ENCODE measurements at regions of chr17 and their contacts with region 1.

Region 1: DNA sequence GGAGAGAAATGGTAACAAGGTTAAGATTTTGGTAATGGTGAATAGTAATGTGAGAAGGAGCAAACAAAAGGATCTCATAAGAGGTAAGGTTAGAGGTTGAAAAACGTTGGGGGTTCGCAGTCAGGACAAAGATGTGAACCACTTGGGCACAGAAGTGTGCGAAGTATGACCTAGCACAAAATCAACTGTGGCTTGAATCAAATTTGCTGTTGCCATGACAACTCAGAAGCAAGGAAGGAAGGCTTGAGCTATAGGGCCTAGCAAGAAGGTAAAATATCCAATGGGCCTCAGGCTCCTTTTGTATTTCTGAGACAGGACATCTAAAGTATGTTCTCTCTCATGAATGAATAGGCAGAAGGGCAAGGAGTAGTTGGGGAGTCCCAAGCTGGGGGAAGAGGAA is 24.5 kb upstream of the TEKT1 start:
- DNase-seq: no peak
- ATAC-seq: no peak

Region 2: DNA sequence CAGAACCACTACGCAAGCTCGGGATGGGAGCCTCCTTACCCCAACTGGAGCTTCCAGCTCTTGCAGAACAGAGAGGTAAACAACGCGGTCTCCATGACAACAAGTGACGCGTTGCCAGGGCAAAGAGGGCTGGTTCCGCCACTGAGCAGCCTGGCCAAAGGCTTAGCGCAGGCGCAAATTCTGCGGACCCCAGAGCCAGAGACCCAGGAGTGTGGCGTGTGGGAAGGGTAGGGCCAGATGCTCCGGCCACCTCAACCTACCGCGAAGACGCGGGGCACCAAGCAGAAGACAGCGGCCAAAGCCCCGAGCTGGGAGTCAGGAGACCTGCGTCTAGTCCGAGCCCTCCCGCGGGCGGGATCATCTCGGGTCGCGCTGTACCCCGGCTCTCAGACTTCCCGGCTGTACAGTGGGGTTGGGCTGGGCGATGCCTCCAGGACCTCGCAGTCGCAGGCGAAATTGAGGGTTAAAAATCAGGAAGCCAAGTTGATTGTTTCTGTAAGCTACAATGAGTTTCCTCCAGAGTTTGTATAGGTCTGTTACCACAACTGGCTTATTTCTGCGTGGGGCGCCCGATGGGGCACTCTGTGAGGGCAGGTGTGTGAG is 24.3 kb before region 1 on chr17 and contains the start of gene TEKT1:
- intact Hi-C with region 1: loop called (anchors 1 kb)
- DNase-seq: peak; percentile 77
- ATAC-seq: peak; percentile 81
- total RNA-seq, gene TEKT1: 0.89 TPM